Activated CD8-positive, alpha-beta T cell treated with anti-CD3 and anti-CD28 coated beads for 36 hours (primary cell): ENCODE measurements at regions of chr7 and their contacts with region 1.

Region 1: GRCh38 chr7:4830176-4830575 is 31.7 kb downstream of the PAPOLB start:
- DNase-seq: peak; percentile 78
- ATAC-seq: peak; percentile 94
- H3K4me3 Mint-ChIP-seq: no peak overlapping the region
- H3K27ac Mint-ChIP-seq: no peak overlapping the region
- H3K4me1 Mint-ChIP-seq: peaks cover 2% of the 10 kb centered on the region
- H3K27me3 Mint-ChIP-seq: no peaks in the 10 kb centered on the region
- CTCF ChIP-seq: peak; percentile 70

Region 2: GRCh38 chr7:5083311-5083711 is 253.1 kb after region 1 on chr7:
- CTCF ChIA-PET with region 1: interaction called, 10 read pairs
- POLR2A ChIA-PET with region 1: no interaction called
- intact Hi-C with region 1: no loop called
- DNase-seq: no peak
- ATAC-seq: no peak
- H3K4me3 Mint-ChIP-seq: no peak overlapping the region
- H3K27ac Mint-ChIP-seq: no peak overlapping the region
- H3K4me1 Mint-ChIP-seq: peaks cover 3% of the 10 kb centered on the region
- H3K27me3 Mint-ChIP-seq: peaks cover 2% of the 10 kb centered on the region
- CTCF ChIP-seq: no peak